ENCODE measurements at regions of chr3 and their contacts with region 1.

Region 1: DNA sequence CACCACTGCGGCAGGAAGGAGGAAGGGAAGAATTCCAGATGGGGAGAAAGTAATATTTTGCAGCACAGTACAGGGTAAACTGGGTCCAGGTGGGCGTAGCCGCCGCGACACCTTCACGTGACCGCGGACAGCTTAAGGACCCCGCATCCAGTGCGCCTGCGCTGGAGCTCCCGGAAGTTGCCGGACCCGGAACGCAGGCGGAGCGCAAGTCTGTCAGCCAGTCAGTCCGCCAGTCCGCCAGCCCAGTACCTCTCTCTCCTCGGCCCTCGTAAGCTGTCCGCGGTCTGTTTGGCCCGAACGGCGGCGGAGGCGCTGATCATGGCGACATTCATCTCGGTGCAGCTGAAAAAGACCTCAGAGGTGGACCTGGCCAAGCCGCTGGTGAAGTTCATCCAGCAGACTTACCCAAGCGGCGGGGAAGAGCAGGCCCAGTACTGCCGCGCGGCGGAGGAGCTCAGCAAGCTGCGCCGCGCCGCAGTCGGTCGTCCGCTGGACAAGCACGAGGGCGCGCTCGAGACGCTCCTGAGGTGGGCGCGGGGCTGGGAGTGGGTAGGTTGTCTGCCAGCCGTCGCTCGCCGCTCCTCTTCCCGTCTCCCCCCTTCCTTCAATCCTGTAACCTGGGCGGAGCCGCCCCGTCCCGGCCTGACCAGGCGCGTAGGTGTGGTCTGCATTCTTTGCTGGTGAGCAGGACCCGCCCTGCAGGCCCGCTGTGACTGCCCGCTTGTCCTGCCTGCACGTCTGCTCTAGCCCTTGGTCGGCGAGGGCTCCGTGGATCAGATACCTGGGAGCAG is at the start of gene PDCD6IP:
- DNase-seq: peak; percentile 97
- total RNA-seq, gene PDCD6IP: 134 TPM

Region 2: GRCh38 chr3:33113772-33114621 is 684.6 kb before region 1 on chr3 and contains the start of gene CRTAP:
- intact Hi-C with region 1: loop called (anchors 10 kb)
- DNase-seq: peak; percentile 98
- total RNA-seq, gene CRTAP: 91.7 TPM

Region 3: GRCh38 chr3:33440323-33441232 is 358.0 kb before region 1 on chr3 and contains the start of gene UBP1:
- intact Hi-C with region 1: loop called (anchors 10 kb)
- DNase-seq: peak; percentile 100
- total RNA-seq, gene UBP1: 46.9 TPM

Region 4: GRCh38 chr3:33658991-33659848 is 139.4 kb before region 1 on chr3:
- intact Hi-C with region 1: loop called (anchors 5 kb)
- DNase-seq: peak; percentile 84

Region 5: GRCh38 chr3:33840179-33840578 is 41.6 kb after region 1 on chr3:
- intact Hi-C with region 1: no loop called
- DNase-seq: no peak

Region 6: GRCh38 chr3:33962396-33962795 is 163.8 kb after region 1 on chr3:
- intact Hi-C with region 1: no loop called
- DNase-seq: no peak

Measured in cardiac septum (tissue), 1 donor.